ENCODE measurements at regions of chr6 and their contacts with region 1.

Region 1: DNA sequence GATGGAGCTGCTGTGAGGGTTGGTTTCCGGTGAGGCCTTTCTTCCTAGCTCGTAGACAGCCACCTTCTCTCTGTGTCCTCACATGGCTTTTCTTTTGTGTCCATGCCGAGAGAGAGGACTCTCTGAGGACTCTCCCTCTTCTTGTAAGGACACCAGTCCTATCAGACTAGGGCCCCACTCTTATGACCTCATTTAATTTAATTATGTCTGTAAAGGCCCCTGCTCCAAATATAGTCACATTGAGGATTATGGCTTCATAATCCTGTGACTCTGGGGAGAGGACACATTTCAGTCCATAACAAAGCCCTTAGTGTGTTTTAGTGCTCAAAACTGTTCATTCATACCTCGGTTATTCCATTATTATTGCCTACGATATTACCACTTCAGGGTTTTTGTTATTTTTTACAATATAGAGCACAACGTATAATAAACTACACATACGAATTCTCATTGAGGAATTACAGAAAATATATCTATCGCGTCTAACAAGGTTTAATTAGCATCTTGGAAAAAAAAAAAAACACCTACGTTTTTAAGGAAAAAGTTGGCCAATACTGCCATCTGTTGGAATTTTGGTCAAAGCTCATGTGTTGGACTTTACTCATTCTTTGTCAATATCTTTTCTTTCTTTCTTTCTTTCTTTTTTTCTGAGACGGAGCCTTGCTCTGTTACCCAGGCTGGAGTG is 20.0 kb upstream of the TFAP2A start:
- DNase-seq: no peak
- ATAC-seq: no peak
- H3K4me3 Mint-ChIP-seq: no peak overlapping the region
- H3K27ac Mint-ChIP-seq: no peak overlapping the region
- H3K4me1 Mint-ChIP-seq: peaks cover 6% of the 10 kb centered on the region
- H3K27me3 Mint-ChIP-seq: peaks cover 18% of the 10 kb centered on the region
- CTCF ChIP-seq: peak; percentile 31

Region 2: GRCh38 chr6:8983188-8983688 is 1451.6 kb before region 1 on chr6:
- CTCF ChIA-PET with region 1: interaction called, 25 read pairs
- POLR2A ChIA-PET with region 1: no interaction called
- intact Hi-C with region 1: loop called (anchors 1 kb)
- DNase-seq: peak; percentile 15
- ATAC-seq: peak; percentile 77
- H3K4me3 Mint-ChIP-seq: no peak overlapping the region
- H3K27ac Mint-ChIP-seq: no peak overlapping the region
- H3K4me1 Mint-ChIP-seq: no peaks in the 10 kb centered on the region
- H3K27me3 Mint-ChIP-seq: no peaks in the 10 kb centered on the region
- CTCF ChIP-seq: peak; percentile 97

Region 3: GRCh38 chr6:11929241-11929850 is 1494.5 kb after region 1 on chr6:
- CTCF ChIA-PET with region 1: no interaction called
- POLR2A ChIA-PET with region 1: no interaction called
- intact Hi-C with region 1: no loop called
- DNase-seq: no peak
- ATAC-seq: no peak
- H3K4me3 Mint-ChIP-seq: no peak overlapping the region
- H3K27ac Mint-ChIP-seq: no peak overlapping the region
- H3K4me1 Mint-ChIP-seq: no peaks in the 10 kb centered on the region
- H3K27me3 Mint-ChIP-seq: no peaks in the 10 kb centered on the region
- CTCF ChIP-seq: no peak